Activated CD4-positive, alpha-beta T cell treated with anti-CD3 and anti-CD28 coated beads for 36 hours (primary cell): ENCODE measurements at regions of chr14 and their contacts with region 1.

Region 1: GRCh38 chr14:102591889-102592763 is at the start of gene RCOR1:
- DNase-seq: peak; percentile 99
- ATAC-seq: peak; percentile 92
- H3K4me3 Mint-ChIP-seq: peak within 1 kb of the TSS; percentile 93
- H3K27ac Mint-ChIP-seq: peak within 1 kb of the TSS; percentile 92
- H3K4me1 Mint-ChIP-seq: peaks cover 33% of the 10 kb centered on the region
- H3K27me3 Mint-ChIP-seq: no peaks in the 10 kb centered on the region
- total RNA-seq, gene RCOR1: 14.8 to 15.3 TPM

Region 2: GRCh38 chr14:101947906-101948665 is 644.0 kb before region 1 on chr14:
- CTCF ChIA-PET with region 1: no interaction called
- POLR2A ChIA-PET with region 1: no interaction called
- intact Hi-C with region 1: loop called in 1 of 2 experiments (anchors 1 kb)
- DNase-seq: peak; percentile 100
- ATAC-seq: peak; percentile 98
- H3K4me3 Mint-ChIP-seq: peak overlapping the region; percentile 89
- H3K27ac Mint-ChIP-seq: peak overlapping the region; percentile 93
- H3K4me1 Mint-ChIP-seq: peaks cover 12% of the 10 kb centered on the region
- H3K27me3 Mint-ChIP-seq: peaks cover 17% of the 10 kb centered on the region

Region 3: DNA sequence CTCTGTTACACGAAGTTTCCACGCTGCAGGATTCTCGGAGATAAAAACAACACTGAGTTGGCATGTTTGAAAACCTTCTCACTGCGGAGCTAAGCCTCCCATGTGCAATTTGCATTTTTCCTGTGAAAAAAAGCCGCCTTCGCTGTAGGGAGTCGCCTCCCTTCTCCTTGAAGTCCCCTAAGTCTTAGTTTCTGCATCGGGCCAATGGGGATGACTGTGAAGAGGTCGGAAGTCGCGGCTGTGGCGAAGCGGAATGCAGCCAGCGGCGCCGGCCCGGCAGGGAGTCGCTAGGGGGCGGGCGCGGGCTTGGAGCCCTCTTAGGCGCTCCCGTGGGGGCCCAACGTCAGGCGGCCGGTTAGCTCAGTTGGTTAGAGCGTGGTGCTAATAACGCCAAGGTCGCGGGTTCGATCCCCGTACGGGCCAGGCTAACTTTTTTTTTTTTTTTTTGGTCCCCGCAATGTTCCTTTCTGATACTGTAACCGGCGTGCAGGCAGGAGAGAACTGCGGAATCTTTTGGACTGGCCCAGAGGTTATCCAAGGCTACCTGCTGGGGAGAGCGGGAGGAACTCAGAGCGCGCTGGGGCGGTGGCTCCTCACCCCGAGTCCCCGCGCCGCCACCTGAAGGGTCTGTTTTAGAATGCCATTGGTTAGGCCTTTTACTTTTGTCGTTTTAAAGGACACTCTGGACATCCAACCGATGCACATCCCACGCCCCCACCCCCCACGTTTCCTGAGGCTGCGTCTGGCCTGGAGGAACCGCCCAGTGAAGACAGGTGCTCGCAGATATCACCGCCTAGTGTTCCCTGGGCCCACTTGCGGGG is 275.2 kb before region 1 on chr14:
- CTCF ChIA-PET with region 1: interaction called, 3 read pairs
- POLR2A ChIA-PET with region 1: no interaction called
- intact Hi-C with region 1: loop called in 1 of 2 experiments (anchors 1 kb)
- DNase-seq: peak; percentile 97
- ATAC-seq: peak; percentile 69
- H3K4me3 Mint-ChIP-seq: peak overlapping the region; percentile 92
- H3K27ac Mint-ChIP-seq: peak overlapping the region; percentile 98
- H3K4me1 Mint-ChIP-seq: peaks cover 61% of the 10 kb centered on the region
- H3K27me3 Mint-ChIP-seq: no peaks in the 10 kb centered on the region

Region 4: GRCh38 chr14:102437997-102438915 is 153.9 kb before region 1 on chr14:
- CTCF ChIA-PET with region 1: no interaction called
- POLR2A ChIA-PET with region 1: no interaction called
- intact Hi-C with region 1: no loop called
- DNase-seq: peak; percentile 83
- ATAC-seq: peak; percentile 81
- H3K4me3 Mint-ChIP-seq: no peak overlapping the region
- H3K27ac Mint-ChIP-seq: no peak overlapping the region
- H3K4me1 Mint-ChIP-seq: no peaks in the 10 kb centered on the region
- H3K27me3 Mint-ChIP-seq: no peaks in the 10 kb centered on the region

Region 5: DNA sequence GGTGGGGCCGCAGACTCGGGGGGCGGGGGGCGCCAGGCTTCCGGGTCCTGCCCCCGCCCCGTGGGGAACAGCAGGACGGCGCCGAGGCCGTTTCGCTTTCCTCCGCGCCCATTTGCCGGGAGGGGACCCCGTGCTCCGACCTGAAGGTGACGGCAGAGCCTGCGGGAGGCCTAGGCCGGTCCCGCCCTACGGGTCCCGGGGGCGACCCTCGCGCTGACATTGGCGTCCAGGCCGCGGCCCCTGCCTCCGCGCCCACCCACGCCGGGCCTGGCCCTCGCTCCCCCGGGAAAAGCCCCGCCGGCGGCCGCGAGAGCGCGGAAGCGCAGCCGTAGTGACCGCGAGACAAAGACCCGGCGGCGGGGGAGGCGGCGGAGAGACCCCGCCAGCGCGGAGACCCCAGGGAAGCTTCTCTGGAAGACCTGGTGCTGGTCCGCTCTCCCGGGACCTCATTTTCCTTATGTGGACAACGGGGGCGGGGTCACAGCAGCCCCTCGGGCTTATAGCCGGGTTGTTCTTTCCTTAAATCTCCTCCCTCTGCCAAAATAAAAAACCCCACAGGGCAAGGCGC is 36.8 kb before region 1 on chr14:
- CTCF ChIA-PET with region 1: no interaction called
- POLR2A ChIA-PET with region 1: no interaction called
- intact Hi-C with region 1: loop called (anchors 1 kb)
- DNase-seq: peak; percentile 70
- ATAC-seq: peak; percentile 81
- H3K4me3 Mint-ChIP-seq: peak overlapping the region; percentile 63
- H3K27ac Mint-ChIP-seq: peak overlapping the region; percentile 55
- H3K4me1 Mint-ChIP-seq: peaks cover 2% of the 10 kb centered on the region
- H3K27me3 Mint-ChIP-seq: peaks cover 3% of the 10 kb centered on the region

Region 6: DNA sequence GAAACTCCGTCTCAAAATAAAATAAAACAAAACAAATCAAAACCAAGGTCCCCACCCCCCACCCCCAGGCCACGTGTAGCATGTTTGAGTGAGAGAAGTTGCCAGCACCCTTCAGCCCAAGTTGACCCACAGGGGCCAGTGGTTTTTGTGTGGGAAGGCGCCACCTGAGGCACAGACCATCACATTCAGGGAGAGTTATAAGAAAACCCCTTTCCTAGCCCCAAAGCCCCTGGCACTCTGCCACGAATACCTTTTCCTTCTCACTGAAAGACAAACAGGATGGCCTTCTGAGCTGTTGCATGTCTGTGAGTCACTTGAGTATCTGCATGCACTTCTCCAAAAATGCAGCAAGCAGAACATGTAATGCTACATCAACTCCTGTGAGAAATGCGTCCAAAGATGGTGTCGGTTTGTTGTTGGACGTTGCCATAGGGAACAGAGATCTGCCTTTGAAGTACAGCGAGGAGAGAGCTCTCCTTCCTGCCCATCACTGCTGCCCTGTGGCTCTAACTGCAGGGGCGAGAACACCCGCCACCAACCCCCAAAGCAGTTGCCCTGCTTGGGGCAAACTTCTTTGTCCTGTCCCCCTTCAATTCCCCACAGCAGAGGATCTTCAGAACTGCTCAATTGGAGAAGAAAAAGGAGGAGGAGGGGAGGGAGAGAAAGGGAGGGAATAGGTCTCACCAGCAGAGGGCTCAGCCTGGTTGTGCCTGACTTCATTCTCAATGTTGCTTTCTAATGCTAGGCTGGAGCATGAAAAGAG is 182.4 kb after region 1 on chr14:
- CTCF ChIA-PET with region 1: no interaction called
- POLR2A ChIA-PET with region 1: interaction called, 7 read pairs
- intact Hi-C with region 1: loop called in 1 of 2 experiments (anchors 2 kb)
- DNase-seq: peak; percentile 73
- ATAC-seq: peak; percentile 58
- H3K4me3 Mint-ChIP-seq: peak overlapping the region; percentile 7
- H3K27ac Mint-ChIP-seq: peak overlapping the region; percentile 78
- H3K4me1 Mint-ChIP-seq: peaks cover 32% of the 10 kb centered on the region
- H3K27me3 Mint-ChIP-seq: no peaks in the 10 kb centered on the region

Region 7: DNA sequence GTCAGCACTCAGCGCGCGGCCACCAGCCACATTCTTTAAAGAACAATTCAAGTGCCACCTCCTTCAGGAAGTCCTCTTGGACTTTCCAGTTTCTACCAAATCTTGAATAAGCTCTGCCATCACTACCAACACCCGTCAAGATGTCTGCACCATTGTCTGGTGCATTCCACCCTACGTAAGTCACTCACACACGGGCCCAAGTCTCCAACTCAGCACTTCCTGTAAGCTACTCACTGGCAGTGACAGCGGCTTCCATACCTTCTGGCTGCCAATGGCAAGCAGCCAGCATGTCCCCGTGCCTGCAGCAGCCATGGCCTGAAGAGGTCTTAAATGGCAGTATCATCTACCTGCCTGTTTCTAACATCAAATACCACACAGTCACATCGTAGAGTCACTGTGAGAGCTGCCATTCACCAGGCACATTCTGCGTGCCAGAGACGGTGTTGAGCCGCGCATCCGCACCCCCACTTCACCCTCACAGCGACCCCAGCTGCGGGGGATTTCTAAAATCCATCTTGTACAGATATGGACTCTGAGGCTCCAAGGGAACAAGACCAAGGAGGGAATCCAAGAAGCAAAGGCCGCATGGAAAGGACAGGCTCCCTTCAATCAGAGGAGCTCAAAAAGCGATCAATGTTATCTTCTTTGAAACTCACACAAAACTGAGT is 416.9 kb after region 1 on chr14:
- CTCF ChIA-PET with region 1: no interaction called
- POLR2A ChIA-PET with region 1: no interaction called
- intact Hi-C with region 1: no loop called
- DNase-seq: no peak
- ATAC-seq: no peak
- H3K4me3 Mint-ChIP-seq: no peak overlapping the region
- H3K27ac Mint-ChIP-seq: no peak overlapping the region
- H3K4me1 Mint-ChIP-seq: no peaks in the 10 kb centered on the region
- H3K27me3 Mint-ChIP-seq: no peaks in the 10 kb centered on the region

Region 8: GRCh38 chr14:103333754-103334643 is 741.9 kb after region 1 on chr14 and contains the start of gene EIF5:
- CTCF ChIA-PET with region 1: interaction called, 4 read pairs
- POLR2A ChIA-PET with region 1: no interaction called
- intact Hi-C with region 1: loop called in 1 of 2 experiments (anchors 1 kb)
- DNase-seq: peak; percentile 99
- ATAC-seq: peak; percentile 91
- H3K4me3 Mint-ChIP-seq: peak within 1 kb of the TSS; percentile 79
- H3K27ac Mint-ChIP-seq: peak within 1 kb of the TSS; percentile 92
- H3K4me1 Mint-ChIP-seq: peaks cover 53% of the 10 kb centered on the region
- H3K27me3 Mint-ChIP-seq: no peaks in the 10 kb centered on the region
- total RNA-seq, gene EIF5: 222 to 234 TPM